Cardiac septum (tissue), 1 donor: ENCODE measurements at regions of chr20 and their contacts with region 1.

Region 1: GRCh38 chr20:54199721-54200176 is 8.1 kb upstream of the PFDN4 start:
- DNase-seq: peak; percentile 88

Region 2: GRCh38 chr20:54097236-54097529 is 102.6 kb before region 1 on chr20:
- intact Hi-C with region 1: loop called (anchors 2 kb)
- DNase-seq: no peak